Calu3 (cell line): ENCODE measurements at regions of chr10 and their contacts with region 1.

Region 1: GRCh38 chr10:127354992-127355391 is 158.6 kb upstream of the INSYN2A start:
- DNase-seq: no peak
- H3K4me3 Mint-ChIP-seq: no peak overlapping the region
- H3K27ac Mint-ChIP-seq: no peak overlapping the region
- H3K4me1 Mint-ChIP-seq: no peaks in the 10 kb centered on the region
- H3K27me3 Mint-ChIP-seq: no peaks in the 10 kb centered on the region
- CTCF ChIP-seq: no peak

Region 2: DNA sequence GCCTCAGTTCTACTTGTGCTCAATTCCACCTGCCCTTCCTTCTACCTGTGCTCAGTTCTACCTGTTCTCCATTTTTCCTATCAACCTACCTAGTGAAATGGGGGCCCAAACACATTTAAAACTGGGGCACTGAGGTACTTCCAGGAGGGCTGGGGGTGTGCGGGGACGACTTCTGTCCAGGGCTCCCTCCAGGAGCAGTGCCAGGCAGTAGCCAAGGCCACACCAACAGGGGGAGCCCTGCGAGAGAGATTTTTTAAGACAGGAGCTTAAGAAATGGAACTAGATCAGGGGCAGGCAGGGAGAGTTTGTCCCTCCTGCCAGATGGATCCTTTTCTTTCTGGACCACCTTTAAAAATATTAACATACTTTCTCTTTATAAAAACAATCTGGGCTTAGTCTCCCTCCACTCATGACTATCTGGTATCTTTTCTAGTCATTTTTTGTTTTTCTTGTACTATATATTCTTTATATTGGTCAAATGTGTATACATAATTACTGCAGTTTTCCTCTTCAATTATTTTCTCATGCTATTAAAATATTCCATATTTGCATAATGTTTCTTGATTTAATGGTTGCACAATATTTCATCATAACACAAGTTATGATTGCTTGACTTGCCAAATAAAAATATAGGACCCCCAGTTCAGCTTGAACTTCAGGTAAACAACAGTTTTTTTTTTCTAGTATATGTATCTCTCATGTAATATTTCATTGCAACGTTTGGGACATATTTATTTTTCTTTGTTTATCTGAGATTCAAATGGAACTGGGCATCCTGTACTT is 111.3 kb before region 1 on chr10:
- CTCF ChIA-PET with region 1: no interaction called
- intact Hi-C with region 1: loop called (anchors 2 kb)
- DNase-seq: peak; percentile 67
- H3K4me3 Mint-ChIP-seq: no peak overlapping the region
- H3K27ac Mint-ChIP-seq: no peak overlapping the region
- H3K4me1 Mint-ChIP-seq: peaks cover 8% of the 10 kb centered on the region
- H3K27me3 Mint-ChIP-seq: no peaks in the 10 kb centered on the region
- CTCF ChIP-seq: peak; percentile 53